Transverse colon (tissue), 4 donors: ENCODE measurements at regions of chr20 and their contacts with region 1.

Region 1: DNA sequence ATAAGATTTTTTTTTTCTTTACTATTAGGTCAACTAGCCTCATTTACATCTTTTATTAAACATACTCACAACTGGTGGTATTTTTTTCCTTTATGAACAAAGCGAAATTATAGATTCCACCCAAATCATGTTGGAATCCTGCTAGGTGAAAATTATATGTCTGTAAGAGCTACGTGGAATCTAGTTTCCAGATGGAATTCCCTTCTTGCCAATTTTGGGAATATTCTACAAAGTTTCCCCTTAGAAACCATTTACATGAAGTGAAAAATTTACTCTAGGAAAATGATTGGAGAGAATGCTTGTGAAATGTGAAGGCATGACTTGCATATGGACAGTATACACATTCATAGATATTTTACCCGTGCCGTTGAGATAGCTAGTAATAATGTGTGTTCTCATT is 1111.3 kb downstream of the KIF16B start:
- DNase-seq: no peak
- H3K4me3 ChIP-seq: no peak overlapping the region
- H3K27ac ChIP-seq: no peak overlapping the region
- H3K4me1 ChIP-seq: no peaks in the 10 kb centered on the region
- H3K27me3 ChIP-seq: no peaks in the 10 kb centered on the region
- CTCF ChIP-seq: no peak
- EP300 ChIP-seq: no peak
- POLR2A ChIP-seq: no peak

Region 2: DNA sequence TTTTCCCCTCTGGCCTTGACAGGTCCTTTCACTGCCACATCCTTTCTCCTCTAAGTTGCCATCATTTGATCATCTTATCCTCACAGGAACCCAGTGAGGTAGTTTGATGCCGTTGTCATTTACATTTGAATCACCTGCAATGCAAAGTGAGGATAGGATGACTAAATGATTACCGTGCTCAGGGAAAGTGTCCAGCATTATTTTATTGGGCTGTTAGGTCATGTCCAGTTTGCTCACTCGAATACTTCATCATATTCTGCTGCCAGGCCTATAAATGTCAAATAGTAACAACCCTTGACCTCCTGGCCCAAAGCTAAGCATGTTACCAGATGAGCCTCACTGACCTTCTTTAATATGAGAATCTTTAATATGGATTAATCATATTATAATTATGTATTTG is 55.9 kb before region 1 on chr20:
- in situ Hi-C with region 1: no loop called
- intact Hi-C with region 1: loop called (anchors 10 kb)
- DNase-seq: no peak
- H3K4me3 ChIP-seq: no peak overlapping the region
- H3K27ac ChIP-seq: no peak overlapping the region
- H3K4me1 ChIP-seq: no peaks in the 10 kb centered on the region
- H3K27me3 ChIP-seq: no peaks in the 10 kb centered on the region
- CTCF ChIP-seq: no peak
- EP300 ChIP-seq: no peak
- POLR2A ChIP-seq: no peak